IMR-90 (cell line): ENCODE measurements at regions of chr19 and their contacts with region 1.

Region 1: DNA sequence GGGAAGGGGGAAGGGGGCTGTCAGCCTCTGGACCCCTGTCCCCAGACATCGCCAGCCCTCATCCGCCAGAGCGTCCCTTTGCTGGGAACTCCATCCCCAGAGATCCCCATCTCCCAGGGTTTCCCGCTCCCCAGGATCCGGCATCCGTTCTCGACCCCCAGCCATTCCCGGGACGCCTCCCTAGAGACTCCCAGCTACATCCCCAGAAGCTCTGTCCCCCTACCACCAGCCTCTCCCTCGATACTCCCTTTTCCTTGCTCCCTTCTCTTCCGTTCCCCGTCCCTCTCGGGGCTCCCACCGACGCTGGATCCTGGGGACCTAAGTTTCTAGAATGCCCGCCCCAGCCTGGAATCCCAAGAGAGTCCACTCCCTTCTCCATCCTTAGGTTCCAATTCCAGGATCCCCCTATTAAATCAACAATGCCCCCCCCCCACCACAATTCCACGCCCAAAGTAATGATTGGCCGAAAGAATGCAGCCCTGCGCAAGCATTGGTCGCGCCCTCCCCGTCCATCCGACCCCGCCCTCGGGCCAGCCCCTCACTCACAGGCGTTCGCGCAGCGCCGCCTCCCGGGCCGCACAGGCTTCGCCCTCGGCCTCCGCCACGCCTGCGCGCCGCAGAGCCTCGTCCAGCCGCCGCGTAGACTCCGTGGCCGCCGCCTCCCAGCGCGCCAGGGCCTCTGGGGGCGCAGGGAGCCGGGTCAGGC is 3.2 kb downstream of the CCDC194 start:
- DNase-seq: peak; percentile 87
- ATAC-seq: peak; percentile 100
- H3K4me3 ChIP-seq: peak overlapping the region; percentile 51
- H3K27ac ChIP-seq: no peak overlapping the region
- H3K4me1 ChIP-seq: peaks cover 2% of the 10 kb centered on the region; the same call in 1 of the 2 replicates
- H3K27me3 ChIP-seq: peaks cover 3% of the 10 kb centered on the region
- CTCF ChIP-seq: peak; percentile 87
- POLR2A ChIP-seq: no peak
- RAD21 ChIP-seq: peak; percentile 61

Region 2: GRCh38 chr19:17292286-17293097 is 98.3 kb before region 1 on chr19:
- CTCF ChIA-PET with region 1: no interaction called
- POLR2A ChIA-PET with region 1: no interaction called
- dilution Hi-C with region 1: no loop called
- in situ Hi-C with region 1: no loop called
- intact Hi-C with region 1: loop called (anchors 2 kb)
- DNase-seq: peak; percentile 82
- ATAC-seq: peak; percentile 94
- H3K4me3 ChIP-seq: peak overlapping the region; percentile 44
- H3K27ac ChIP-seq: peak overlapping the region; percentile 93
- H3K4me1 ChIP-seq: peaks cover 2% of the 10 kb centered on the region; the same call in 1 of the 2 replicates
- H3K27me3 ChIP-seq: no peaks in the 10 kb centered on the region
- CTCF ChIP-seq: peak; percentile 82
- POLR2A ChIP-seq: no peak; the same call in 1 of the 2 replicates
- RAD21 ChIP-seq: peak; percentile 84

Region 3: DNA sequence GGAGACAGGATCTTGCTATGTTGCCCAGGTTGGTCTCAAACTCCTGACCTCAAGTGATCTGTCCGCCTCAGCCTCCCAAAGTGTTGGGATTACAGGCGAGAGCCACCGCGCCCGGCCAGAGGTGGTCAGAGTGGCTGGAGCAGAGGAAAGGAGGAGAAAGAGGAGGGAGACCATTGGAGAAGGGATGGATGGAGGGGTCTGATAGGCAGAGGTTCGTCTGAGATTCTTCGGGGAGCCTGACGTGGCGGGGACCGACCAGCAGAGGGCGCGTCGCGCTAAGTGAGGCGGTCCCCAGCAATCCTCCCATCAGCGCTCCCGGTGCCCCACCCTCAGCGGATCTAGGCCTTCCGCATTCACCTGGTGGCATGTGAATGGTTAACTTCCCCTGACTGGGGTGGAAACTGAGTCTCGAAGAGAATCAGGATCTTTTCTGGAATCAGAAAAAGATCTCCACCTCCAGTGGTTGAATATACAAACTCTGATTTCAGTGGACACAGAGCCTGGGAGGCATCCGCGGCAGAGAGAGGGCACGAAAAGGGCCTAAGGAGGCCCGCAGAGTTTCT is 44.6 kb before region 1 on chr19:
- CTCF ChIA-PET with region 1: interaction called, 3 read pairs
- POLR2A ChIA-PET with region 1: no interaction called
- dilution Hi-C with region 1: no loop called
- in situ Hi-C with region 1: loop called (anchors 5 kb)
- intact Hi-C with region 1: loop called (anchors 1 kb)
- DNase-seq: peak; percentile 42
- ATAC-seq: peak; percentile 98
- H3K4me3 ChIP-seq: no peak overlapping the region
- H3K27ac ChIP-seq: no peak overlapping the region
- H3K4me1 ChIP-seq: 0 out of 2 replicates have a peak, but pooled peaks cover 2% of the 10 kb centered on the region
- H3K27me3 ChIP-seq: peaks cover 2% of the 10 kb centered on the region; the same call in 1 of the 2 replicates
- CTCF ChIP-seq: peak; percentile 90
- POLR2A ChIP-seq: no peak
- RAD21 ChIP-seq: peak; percentile 80

Region 4: DNA sequence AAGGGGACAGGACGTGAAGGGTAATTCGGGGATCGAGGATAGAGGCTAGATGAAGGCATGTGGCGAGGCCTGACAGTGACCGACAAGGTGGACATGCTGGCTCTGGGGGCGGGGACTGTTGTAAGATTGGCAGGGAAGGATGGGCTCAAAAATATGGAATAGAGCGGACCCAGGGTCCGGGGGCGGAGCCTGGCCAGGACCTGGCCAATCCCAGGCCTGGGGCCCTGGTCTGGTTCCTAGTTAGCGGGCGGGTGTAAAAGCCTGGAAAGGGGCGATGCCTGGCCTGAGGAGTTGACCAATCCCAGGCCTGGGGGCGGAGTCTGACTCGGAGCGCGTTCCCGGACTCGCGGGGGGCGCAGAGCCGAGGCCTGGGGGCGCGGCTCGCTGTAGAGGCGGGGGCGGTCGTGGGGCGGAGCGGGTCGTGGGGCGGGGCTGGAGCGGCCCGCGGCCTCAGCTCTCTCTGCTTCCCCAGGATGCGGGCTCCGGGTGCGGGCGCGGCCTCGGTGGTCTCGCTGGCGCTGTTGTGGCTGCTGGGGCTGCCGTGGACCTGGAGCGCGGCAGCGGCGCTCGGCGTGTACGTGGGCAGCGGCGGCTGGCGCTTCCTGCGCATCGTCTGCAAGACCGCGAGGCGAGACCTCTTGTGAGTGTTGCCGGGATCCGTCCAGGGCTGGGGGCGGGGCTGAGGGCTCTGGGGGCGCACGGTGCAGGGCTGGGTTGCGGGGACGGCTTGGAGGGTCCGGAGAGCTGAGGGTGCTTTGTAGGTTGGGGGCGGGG is 79.4 kb after region 1 on chr19 and contains the start of gene SLC27A1:
- CTCF ChIA-PET with region 1: interaction called, 7 read pairs
- POLR2A ChIA-PET with region 1: no interaction called
- dilution Hi-C with region 1: no loop called
- in situ Hi-C with region 1: no loop called
- intact Hi-C with region 1: loop called (anchors 1 kb)
- DNase-seq: peak; percentile 98
- ATAC-seq: peak; percentile 94
- H3K4me3 ChIP-seq: peak within 1 kb of the TSS; percentile 91
- H3K27ac ChIP-seq: peak within 1 kb of the TSS; percentile 73
- H3K4me1 ChIP-seq: peaks cover 12% of the 10 kb centered on the region
- H3K27me3 ChIP-seq: no peaks in the 10 kb centered on the region
- CTCF ChIP-seq: no peak
- POLR2A ChIP-seq: peak; percentile 58; the same call in 1 of the 2 replicates
- RAD21 ChIP-seq: no peak
- total RNA-seq, gene SLC27A1: 4.8 and 5.6 TPM in 2 replicates

Region 5: GRCh38 chr19:17555480-17555928 is 164.7 kb after region 1 on chr19 and contains the start of gene COLGALT1:
- CTCF ChIA-PET with region 1: no interaction called
- POLR2A ChIA-PET with region 1: no interaction called
- dilution Hi-C with region 1: no loop called
- in situ Hi-C with region 1: no loop called
- intact Hi-C with region 1: loop called (anchors 10 kb)
- DNase-seq: peak; percentile 94
- ATAC-seq: peak; percentile 95
- H3K4me3 ChIP-seq: peak within 1 kb of the TSS; percentile 84
- H3K27ac ChIP-seq: peak within 1 kb of the TSS; percentile 94
- H3K4me1 ChIP-seq: peaks cover 3% of the 10 kb centered on the region; the same call in 1 of the 2 replicates
- H3K27me3 ChIP-seq: no peaks in the 10 kb centered on the region
- CTCF ChIP-seq: no peak
- POLR2A ChIP-seq: no peak; the same call in none of the 2 replicates
- RAD21 ChIP-seq: no peak
- total RNA-seq, gene COLGALT1: 74.2 and 77.1 TPM in 2 replicates

Region 6: DNA sequence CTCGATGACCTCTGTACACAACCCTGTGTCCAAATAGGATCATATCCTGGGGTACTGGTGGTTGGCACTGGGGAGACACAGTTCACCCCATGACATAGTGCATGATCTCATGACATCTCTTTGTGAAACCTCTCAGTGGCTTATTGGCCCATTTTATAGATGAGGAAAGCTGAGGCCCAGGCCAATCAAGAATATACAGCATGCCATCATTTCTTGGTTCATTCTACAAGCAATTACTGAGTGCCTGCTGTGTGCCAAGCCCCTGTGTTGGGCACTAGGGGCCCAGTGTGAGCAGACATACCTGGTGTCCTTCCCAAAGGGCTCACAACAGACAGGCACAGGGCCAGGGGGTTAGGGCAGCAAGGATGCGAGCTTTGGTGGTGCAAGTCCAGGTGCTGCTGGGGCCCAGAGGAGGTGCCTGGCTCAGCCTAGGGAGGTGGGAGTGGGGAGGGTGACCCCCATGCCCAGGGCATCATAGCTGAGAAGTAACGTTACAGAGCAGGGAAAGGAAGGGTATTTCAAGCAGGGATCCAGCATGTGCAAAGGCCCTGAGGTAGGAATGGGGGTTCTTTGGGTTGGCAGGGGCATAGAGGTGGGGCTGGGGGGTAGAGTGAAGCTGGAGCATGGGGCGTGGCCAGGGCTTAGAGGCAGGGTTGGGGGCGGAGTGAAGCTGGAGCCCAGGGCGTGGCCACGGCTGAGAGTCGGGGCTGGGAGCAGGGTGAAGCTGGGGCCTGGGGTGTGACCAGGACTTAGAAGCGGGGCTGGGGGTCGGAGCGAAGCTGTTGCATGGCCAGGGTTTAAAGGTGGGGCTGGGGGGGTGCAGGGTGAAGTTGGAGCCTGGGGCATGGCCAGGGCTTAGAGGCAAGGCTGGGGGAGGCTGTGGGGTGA is 185.3 kb after region 1 on chr19:
- CTCF ChIA-PET with region 1: no interaction called
- POLR2A ChIA-PET with region 1: no interaction called
- dilution Hi-C with region 1: no loop called
- in situ Hi-C with region 1: no loop called
- intact Hi-C with region 1: loop called (anchors 2 kb)
- DNase-seq: no peak
- ATAC-seq: no peak
- H3K4me3 ChIP-seq: no peak overlapping the region
- H3K27ac ChIP-seq: no peak overlapping the region
- H3K4me1 ChIP-seq: no peaks in the 10 kb centered on the region
- H3K27me3 ChIP-seq: no peaks in the 10 kb centered on the region
- CTCF ChIP-seq: no peak
- POLR2A ChIP-seq: no peak
- RAD21 ChIP-seq: no peak